ENCODE measurements at regions of chr19 and their contacts with region 1.

Region 1: GRCh38 chr19:29966588-29967249 is 24.7 kb downstream of the URI1 start:
- H3K4me3 ChIP-seq: no peak overlapping the region
- H3K27ac ChIP-seq: no peak overlapping the region
- H3K4me1 ChIP-seq: peaks cover 90% of the 10 kb centered on the region
- CTCF ChIP-seq: peak; percentile 53; the same call in 1 of the 2 replicates

Region 2: GRCh38 chr19:29735800-29736199 is 230.9 kb before region 1 on chr19:
- CTCF ChIA-PET with region 1: interaction called, 14 read pairs
- POLR2A ChIA-PET with region 1: no interaction called
- H3K4me3 ChIP-seq: no peak overlapping the region
- H3K27ac ChIP-seq: no peak overlapping the region
- H3K4me1 ChIP-seq: no peaks in the 10 kb centered on the region
- CTCF ChIP-seq: no peak

Region 3: GRCh38 chr19:29941828-29942403 is 24.8 kb before region 1 on chr19 and contains the start of gene URI1:
- CTCF ChIA-PET with region 1: interaction called, 22 read pairs
- POLR2A ChIA-PET with region 1: interaction called, 15 read pairs
- H3K4me3 ChIP-seq: peak within 1 kb of the TSS; percentile 79
- H3K27ac ChIP-seq: peak within 1 kb of the TSS; percentile 93
- H3K4me1 ChIP-seq: peaks cover 40% of the 10 kb centered on the region
- CTCF ChIP-seq: no peak

Region 4: GRCh38 chr19:29978080-29978479 is 11.4 kb after region 1 on chr19:
- CTCF ChIA-PET with region 1: interaction called, 33 read pairs
- POLR2A ChIA-PET with region 1: no interaction called
- H3K4me3 ChIP-seq: no peak overlapping the region
- H3K27ac ChIP-seq: no peak overlapping the region
- H3K4me1 ChIP-seq: peaks cover 48% of the 10 kb centered on the region
- CTCF ChIP-seq: no peak

Region 5: GRCh38 chr19:29988351-29988750 is 21.6 kb after region 1 on chr19:
- CTCF ChIA-PET with region 1: interaction called, 26 read pairs
- POLR2A ChIA-PET with region 1: interaction called, 10 read pairs
- H3K4me3 ChIP-seq: no peak overlapping the region
- H3K27ac ChIP-seq: no peak overlapping the region
- H3K4me1 ChIP-seq: peaks cover 4% of the 10 kb centered on the region; the same call in 1 of the 2 replicates
- CTCF ChIP-seq: no peak

Region 6: DNA sequence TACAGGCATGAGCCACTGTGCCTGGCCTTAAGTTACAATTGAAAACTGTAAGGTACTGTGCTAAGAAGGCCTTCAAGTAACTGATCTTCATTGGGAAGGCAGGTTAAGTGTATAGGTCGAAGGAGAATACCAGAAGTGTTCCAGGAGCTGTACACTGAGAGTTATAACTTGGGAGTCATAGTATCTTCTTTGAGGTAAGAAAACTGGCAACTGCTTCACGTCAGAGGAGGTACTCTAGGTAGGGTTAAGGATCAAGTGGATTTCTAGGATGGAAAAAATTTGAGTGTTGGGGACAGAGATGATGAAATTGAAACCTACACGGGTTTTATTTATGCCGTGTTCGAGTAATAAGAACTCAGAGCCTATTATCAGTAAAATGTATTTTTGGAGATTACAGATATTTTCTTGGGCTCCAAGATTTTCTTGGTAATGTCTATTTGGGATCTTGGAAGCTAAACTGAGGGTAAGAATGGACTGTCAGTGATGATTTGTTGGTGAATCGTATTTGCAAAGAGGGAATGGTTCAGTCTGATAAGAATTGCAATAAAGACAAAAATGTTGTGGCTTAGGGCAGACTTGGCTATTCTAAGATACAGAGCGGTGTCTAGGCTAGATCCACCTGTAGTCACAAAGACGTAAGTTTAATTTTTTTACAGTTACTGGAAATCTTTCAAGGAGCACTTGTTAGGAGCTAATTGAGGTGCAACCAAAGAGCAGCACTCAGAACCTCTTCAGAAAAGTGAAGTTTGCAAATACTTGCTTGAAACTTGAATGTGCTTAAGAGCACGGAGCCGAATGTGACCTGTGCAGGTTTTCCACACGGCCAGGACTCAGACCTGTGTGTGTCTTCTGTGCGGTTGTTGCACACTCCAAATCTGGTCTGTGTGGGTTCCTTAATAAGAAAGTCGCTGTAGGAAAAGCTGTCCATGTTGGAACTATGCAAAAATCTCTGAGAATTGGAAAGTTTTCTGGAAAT is 77.8 kb after region 1 on chr19:
- CTCF ChIA-PET with region 1: no interaction called
- POLR2A ChIA-PET with region 1: no interaction called
- H3K4me3 ChIP-seq: no peak overlapping the region
- H3K27ac ChIP-seq: no peak overlapping the region
- H3K4me1 ChIP-seq: peaks cover 23% of the 10 kb centered on the region
- CTCF ChIP-seq: no peak